Caco-2 (cell line): ENCODE measurements at regions of chr16 and their contacts with region 1.

Region 1: GRCh38 chr16:679814-680622 is at the start of gene STUB1:
- DNase-seq: peak; percentile 90 to 93
- H3K4me3 ChIP-seq: peak within 1 kb of the TSS; percentile 67
- H3K4me3 Mint-ChIP-seq: peak within 1 kb of the TSS; percentile 79
- H3K27ac Mint-ChIP-seq: peak within 1 kb of the TSS; percentile 72
- H3K4me1 ChIP-seq: peaks cover 30% of the 10 kb centered on the region
- H3K4me1 Mint-ChIP-seq: no peaks in the 10 kb centered on the region
- H3K27me3 ChIP-seq: no peaks in the 10 kb centered on the region
- H3K27me3 Mint-ChIP-seq: no peaks in the 10 kb centered on the region
- CTCF ChIP-seq: no peak
- total RNA-seq, gene STUB1: 77.8 and 86.6 TPM in 2 replicates

Region 2: GRCh38 chr16:695355-696089 is 15.5 kb after region 1 on chr16:
- CTCF ChIA-PET with region 1: interaction called, 3 read pairs
- POLR2A ChIA-PET with region 1: interaction called, 10 read pairs
- intact Hi-C with region 1: no loop called
- DNase-seq: peak; percentile 75 to 81
- H3K4me3 ChIP-seq: peak overlapping the region; percentile 51
- H3K4me3 Mint-ChIP-seq: peak overlapping the region; percentile 71
- H3K27ac Mint-ChIP-seq: peak overlapping the region; percentile 50
- H3K4me1 ChIP-seq: peaks cover 12% of the 10 kb centered on the region; the same call in 1 of the 2 replicates
- H3K4me1 Mint-ChIP-seq: peaks cover under 1% of the 10 kb centered on the region
- H3K27me3 ChIP-seq: no peaks in the 10 kb centered on the region
- H3K27me3 Mint-ChIP-seq: no peaks in the 10 kb centered on the region
- CTCF ChIP-seq: no peak

Region 3: GRCh38 chr16:714558-715476 is 34.8 kb after region 1 on chr16 and contains the start of gene METRN:
- CTCF ChIA-PET with region 1: no interaction called
- POLR2A ChIA-PET with region 1: no interaction called
- intact Hi-C with region 1: no loop called
- DNase-seq: peak; percentile 84 to 94
- H3K4me3 ChIP-seq: peak within 1 kb of the TSS; percentile 71
- H3K4me3 Mint-ChIP-seq: peak within 1 kb of the TSS; percentile 66
- H3K27ac Mint-ChIP-seq: no peak within 1 kb of the TSS
- H3K4me1 ChIP-seq: peaks cover 31% of the 10 kb centered on the region
- H3K4me1 Mint-ChIP-seq: peaks cover 7% of the 10 kb centered on the region
- H3K27me3 ChIP-seq: no peaks in the 10 kb centered on the region
- H3K27me3 Mint-ChIP-seq: no peaks in the 10 kb centered on the region
- CTCF ChIP-seq: no peak
- total RNA-seq, gene METRN: 20.0 and 23.4 TPM in 2 replicates